GM18951 (cell line): ENCODE measurements at regions of chr1 and their contacts with region 1.

Region 1: GRCh38 chr1:27952147-27952546 is 7.6 kb upstream of the XKR8 start:
- POLR2A ChIP-seq: no peak

Region 2: GRCh38 chr1:27634177-27634984 is 317.8 kb before region 1 on chr1:
- in situ Hi-C with region 1: no loop called
- POLR2A ChIP-seq: peak; percentile 48

Region 3: DNA sequence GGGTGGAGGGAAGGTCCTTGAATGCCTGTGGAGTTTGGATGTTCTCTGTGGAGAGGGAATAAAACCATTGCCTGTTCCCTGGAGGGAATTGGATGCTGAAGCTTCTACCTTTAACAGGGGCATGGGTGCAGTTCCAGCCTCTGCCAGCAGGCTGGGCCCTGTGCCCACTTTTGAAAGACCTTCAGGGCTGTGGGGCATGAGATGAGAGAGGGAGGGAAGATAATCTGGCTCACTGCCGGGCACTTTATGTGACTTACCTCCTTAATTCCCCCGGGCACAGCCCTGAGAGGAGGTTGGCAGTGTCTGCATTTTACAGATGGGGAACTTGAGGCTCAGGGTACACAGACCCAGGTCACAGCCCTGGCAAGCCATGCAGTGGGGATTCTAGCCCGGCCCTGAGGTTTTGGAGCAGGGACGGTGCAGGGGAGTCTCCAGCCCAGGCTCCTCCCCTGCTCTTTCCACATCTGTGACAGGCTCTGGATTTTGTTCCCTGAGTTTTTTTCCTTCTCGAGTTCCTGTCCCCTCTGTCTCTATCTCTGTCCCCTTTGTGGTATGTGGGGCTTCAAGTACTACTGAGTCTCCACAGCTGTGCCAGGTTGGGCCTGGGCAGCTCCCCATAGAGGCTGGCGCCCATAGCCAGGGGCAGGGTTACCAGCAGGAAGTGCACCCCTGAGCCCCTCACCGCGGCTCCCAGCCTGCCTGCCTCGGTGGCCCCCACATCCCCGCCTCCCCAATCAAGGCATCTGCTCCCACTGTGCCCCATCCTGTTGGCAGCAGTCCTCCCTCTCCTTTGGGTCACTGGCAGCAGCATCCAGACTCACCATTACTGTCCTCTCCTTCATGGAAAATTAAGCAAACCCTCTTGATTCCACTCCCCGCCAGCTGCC is 93.8 kb before region 1 on chr1:
- in situ Hi-C with region 1: loop called (anchors 5 kb)
- POLR2A ChIP-seq: no peak

Region 4: GRCh38 chr1:28160782-28161266 is 208.7 kb after region 1 on chr1:
- in situ Hi-C with region 1: no loop called
- POLR2A ChIP-seq: no peak